Activated T-helper 1 cell treated with anti-CD3 and anti-CD28 coated beads, Interleukin-12 subunit alpha, Interleukin-12 subunit beta, Interleukin-2, Interleukin-4 antibody, amounts not matched to agents 30 ng/mL and 10 ng/mL and 1 ng/mL, durations not matched to agents 14 hours and 24 hours and 36 hours (primary cell): ENCODE measurements at regions of chr5 and their contacts with region 1.

Region 1: DNA sequence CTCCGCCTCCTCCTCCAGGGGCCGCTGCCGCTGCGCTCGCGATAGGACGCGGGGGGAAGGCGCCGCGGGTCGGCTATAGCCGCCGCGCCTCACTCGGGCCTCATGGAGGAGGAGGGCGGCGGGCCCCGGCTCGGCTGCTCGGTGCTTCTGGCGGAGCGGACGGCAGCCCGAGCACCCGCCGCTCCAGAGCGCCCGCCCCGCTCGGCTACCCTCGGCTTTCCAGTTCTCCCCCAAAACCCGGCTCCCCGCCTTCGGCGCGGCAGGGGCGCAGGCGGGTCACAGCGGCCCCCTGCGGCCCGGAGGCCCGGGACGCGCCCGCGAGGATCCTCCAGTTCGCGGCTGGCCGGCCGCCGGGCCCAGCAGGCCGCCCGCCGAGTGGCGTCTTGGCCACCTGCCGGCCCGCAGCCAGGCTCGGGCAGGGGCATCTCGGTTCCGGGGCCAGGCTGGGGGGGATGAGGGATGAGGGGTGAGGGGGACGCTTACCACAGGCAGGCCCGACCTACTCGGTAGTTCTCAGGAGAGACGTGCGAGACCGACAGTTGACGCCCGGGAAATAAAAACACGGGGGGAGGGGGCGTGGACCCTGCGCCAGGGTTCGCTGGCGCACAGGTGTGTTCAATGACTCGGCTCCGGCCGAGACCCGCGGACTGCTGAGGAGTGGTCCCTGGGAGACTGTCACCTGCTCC is at the start of gene PAIP1:
- DNase-seq: peak; percentile 83
- H3K4me3 Mint-ChIP-seq: peak within 1 kb of the TSS; percentile 92
- H3K27ac Mint-ChIP-seq: peak within 1 kb of the TSS; percentile 93
- H3K4me1 Mint-ChIP-seq: peaks cover 10% of the 10 kb centered on the region
- H3K27me3 Mint-ChIP-seq: no peaks in the 10 kb centered on the region
- total RNA-seq, gene PAIP1: 59.0 and 60.8 TPM in 2 replicates

Region 2: GRCh38 chr5:42268630-42269029 is 1288.4 kb before region 1 on chr5:
- intact Hi-C with region 1: no loop called
- DNase-seq: no peak
- H3K4me3 Mint-ChIP-seq: no peak overlapping the region
- H3K27ac Mint-ChIP-seq: peak overlapping the region; percentile 50
- H3K4me1 Mint-ChIP-seq: no peaks in the 10 kb centered on the region
- H3K27me3 Mint-ChIP-seq: peaks cover 2% of the 10 kb centered on the region

Region 3: DNA sequence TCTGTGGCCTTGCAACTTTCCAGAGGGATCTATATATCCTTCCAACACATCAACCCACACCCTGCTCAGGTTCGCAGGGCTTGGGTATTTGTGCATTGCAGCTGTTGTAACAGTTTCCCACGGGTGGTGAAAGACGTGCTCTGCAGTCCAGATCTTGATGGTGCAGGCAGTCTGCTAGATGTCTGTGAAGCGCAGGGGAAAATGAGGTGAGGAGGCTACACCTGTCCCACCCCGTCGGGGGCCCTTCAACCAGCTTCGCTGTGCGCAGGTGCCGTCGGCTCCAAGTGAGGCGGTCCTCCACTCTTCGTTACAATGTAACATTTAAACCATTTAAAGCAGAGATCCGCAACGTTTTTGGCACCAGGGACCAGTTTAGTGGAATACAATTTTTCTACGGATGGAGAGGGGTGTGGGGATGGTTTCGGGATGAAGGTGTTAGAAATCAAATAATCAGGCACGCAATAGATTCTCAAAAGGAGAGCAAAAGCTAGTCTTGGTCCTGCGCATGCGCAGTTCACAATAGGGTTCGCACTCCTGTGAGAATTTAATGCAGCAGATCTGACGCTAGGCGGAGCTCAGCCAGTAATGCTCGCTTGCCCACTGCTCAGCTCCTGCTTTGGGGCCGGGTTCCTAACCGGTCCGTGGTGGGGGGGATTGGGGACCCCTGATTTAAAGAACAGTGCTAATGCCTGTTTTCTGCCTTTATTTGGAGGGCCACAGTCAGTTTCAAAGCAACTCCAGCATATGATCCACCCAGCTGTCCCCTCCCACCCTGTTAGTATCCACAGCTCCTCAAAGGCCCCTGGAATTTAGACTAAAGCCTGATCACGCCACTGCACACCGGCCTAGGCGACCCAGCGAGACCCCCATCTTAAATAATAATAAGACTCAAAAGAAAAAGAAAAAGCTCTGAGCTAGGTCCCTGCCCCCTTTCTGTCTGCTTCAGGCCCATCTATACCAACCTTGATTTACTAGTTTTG is 648.2 kb before region 1 on chr5:
- intact Hi-C with region 1: loop called (anchors 5 kb)
- DNase-seq: peak; percentile 84
- H3K4me3 Mint-ChIP-seq: peak overlapping the region; percentile 81
- H3K27ac Mint-ChIP-seq: peak overlapping the region; percentile 50
- H3K4me1 Mint-ChIP-seq: peaks cover 12% of the 10 kb centered on the region
- H3K27me3 Mint-ChIP-seq: peaks cover 26% of the 10 kb centered on the region

Region 4: DNA sequence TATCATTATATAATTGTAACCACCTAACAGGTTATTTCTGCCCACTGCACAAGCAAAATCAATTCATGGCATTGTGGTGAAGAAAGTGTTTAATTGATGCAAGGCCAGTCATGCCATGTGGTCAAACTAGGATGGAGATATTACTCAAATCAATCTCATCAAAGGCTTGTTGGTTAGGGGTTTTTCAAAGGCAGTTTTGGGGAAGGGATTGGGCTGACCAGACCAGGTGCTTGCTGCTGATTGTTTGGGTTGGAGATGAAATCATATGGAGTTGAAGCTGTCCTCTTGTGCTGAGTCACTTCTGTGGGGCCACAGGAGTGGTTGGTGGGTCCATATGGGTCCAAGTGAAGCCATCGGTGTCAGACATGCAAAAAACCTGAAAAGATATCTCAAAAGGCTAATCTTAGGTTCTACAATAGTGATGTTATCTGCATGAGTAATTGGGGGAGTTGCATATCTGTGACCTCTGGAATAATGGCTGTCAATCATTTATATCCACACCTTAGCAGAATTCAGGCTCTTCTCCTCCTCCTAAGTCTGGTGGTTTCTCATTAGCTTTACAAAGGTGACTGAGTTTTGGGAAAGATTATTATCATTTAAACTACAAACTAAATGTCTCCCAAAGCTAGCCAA is 288.7 kb before region 1 on chr5:
- intact Hi-C with region 1: no loop called
- DNase-seq: no peak
- H3K4me3 Mint-ChIP-seq: no peak overlapping the region
- H3K27ac Mint-ChIP-seq: no peak overlapping the region
- H3K4me1 Mint-ChIP-seq: peaks cover 13% of the 10 kb centered on the region
- H3K27me3 Mint-ChIP-seq: peaks cover 20% of the 10 kb centered on the region

Region 5: GRCh38 chr5:43396762-43397304 is 160.2 kb before region 1 on chr5:
- intact Hi-C with region 1: loop called (anchors 5 kb)
- DNase-seq: peak; percentile 62
- H3K4me3 Mint-ChIP-seq: peak overlapping the region; percentile 87
- H3K27ac Mint-ChIP-seq: peak overlapping the region; percentile 88
- H3K4me1 Mint-ChIP-seq: peaks cover 12% of the 10 kb centered on the region
- H3K27me3 Mint-ChIP-seq: peaks cover 2% of the 10 kb centered on the region

Region 6: DNA sequence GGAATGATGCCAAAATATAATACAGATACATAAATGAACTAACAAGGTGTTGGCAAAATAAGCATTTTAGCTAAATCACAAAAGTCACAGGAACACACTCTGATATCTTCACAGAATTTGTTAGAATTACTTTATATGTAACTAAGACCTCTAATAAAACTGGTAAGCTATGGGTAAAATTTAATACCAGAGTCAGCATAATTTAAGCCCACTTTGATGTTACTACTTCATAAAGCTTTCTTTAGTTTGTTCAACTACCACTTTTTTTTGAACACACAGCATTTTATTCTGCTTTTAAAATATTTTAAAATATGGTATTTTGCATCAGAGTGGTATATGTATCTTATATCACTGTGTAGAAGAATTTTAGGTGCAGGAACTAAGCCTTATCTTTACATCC is 20.0 kb before region 1 on chr5:
- intact Hi-C with region 1: loop called (anchors 2 kb)
- DNase-seq: no peak
- H3K4me3 Mint-ChIP-seq: no peak overlapping the region
- H3K27ac Mint-ChIP-seq: no peak overlapping the region
- H3K4me1 Mint-ChIP-seq: peaks cover 27% of the 10 kb centered on the region
- H3K27me3 Mint-ChIP-seq: no peaks in the 10 kb centered on the region

Region 7: DNA sequence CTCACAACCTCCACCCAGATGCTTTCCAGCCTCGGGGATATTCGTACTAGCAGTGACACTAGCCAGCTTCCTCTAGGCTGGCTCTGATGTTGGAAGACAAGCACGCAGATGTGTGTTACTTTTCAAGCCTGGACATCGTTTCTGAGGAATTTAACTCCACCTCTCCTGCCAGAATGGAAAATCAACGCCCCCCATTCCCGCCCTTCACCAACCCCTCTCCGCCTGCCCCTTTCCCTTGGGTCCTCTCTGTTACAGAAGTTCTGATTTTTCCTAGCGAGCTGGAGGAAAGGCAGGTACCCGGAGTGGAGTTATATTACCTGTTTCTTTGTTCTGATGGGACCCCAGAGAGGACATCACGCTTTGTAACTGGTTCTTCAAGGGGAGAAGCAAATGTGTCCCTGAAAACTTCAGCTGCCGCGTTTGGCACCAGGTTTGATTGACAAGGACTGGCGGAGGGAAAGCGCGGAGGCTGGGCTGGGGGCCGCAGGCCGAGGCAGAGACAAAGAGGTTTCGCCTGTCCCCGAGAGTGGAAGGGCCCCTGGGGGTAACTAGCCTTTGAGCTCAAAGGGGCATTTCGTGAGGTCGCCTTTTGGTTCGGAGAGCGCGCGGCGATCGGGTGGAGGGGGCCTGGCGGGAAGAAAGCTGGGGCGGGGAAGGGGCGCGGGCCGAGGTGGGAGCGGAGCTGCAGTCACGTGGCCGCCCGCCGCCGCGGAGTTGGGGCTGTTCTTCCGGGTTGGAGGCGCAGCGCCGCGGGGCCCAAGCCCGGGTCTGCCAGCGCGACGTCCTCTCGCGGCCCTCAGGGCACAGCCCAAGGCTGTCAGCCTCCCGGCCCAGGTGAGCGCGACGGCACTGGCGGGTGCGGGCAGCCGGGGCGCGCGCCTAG is 45.7 kb after region 1 on chr5 and contains the start of gene NNT:
- intact Hi-C with region 1: loop called (anchors 1 kb)
- DNase-seq: peak; percentile 76
- H3K4me3 Mint-ChIP-seq: peak within 1 kb of the TSS; percentile 91
- H3K27ac Mint-ChIP-seq: peak within 1 kb of the TSS; percentile 91
- H3K4me1 Mint-ChIP-seq: peaks cover 34% of the 10 kb centered on the region
- H3K27me3 Mint-ChIP-seq: no peaks in the 10 kb centered on the region
- total RNA-seq, gene NNT: 43.6 and 47.5 TPM in 2 replicates

Region 8: GRCh38 chr5:44808435-44809214 is 1251.6 kb after region 1 on chr5 and contains the start of gene MRPS30:
- intact Hi-C with region 1: loop called (anchors 5 kb)
- DNase-seq: peak; percentile 91
- H3K4me3 Mint-ChIP-seq: peak within 1 kb of the TSS; percentile 99
- H3K27ac Mint-ChIP-seq: peak within 1 kb of the TSS; percentile 98
- H3K4me1 Mint-ChIP-seq: peaks cover 42% of the 10 kb centered on the region
- H3K27me3 Mint-ChIP-seq: no peaks in the 10 kb centered on the region
- total RNA-seq, gene MRPS30: 62.9 and 63.5 TPM in 2 replicates